CD4-positive, alpha-beta T cell (primary cell): ENCODE measurements at regions of chr7 and their contacts with region 1.

Region 1: GRCh38 chr7:147483634-147484292 is 1106.8 kb upstream of the C7orf33 start:
- DNase-seq: no peak
- ATAC-seq: no peak
- H3K4me3 ChIP-seq: no peak overlapping the region
- H3K4me3 Mint-ChIP-seq: no peak overlapping the region
- H3K27ac ChIP-seq: no peak overlapping the region
- H3K27ac Mint-ChIP-seq: no peak overlapping the region
- H3K4me1 ChIP-seq: no peaks in the 10 kb centered on the region
- H3K4me1 Mint-ChIP-seq: no peaks in the 10 kb centered on the region
- H3K27me3 ChIP-seq: no peaks in the 10 kb centered on the region
- H3K27me3 Mint-ChIP-seq: no peaks in the 10 kb centered on the region
- CTCF ChIP-seq: no peak

Region 2: GRCh38 chr7:147443942-147444341 is 39.8 kb before region 1 on chr7:
- CTCF ChIA-PET with region 1: no interaction called
- POLR2A ChIA-PET with region 1: no interaction called
- intact Hi-C with region 1: loop called in 1 of 2 experiments (anchors 2 kb)
- DNase-seq: no peak
- ATAC-seq: no peak
- H3K4me3 ChIP-seq: no peak overlapping the region
- H3K4me3 Mint-ChIP-seq: no peak overlapping the region
- H3K27ac ChIP-seq: no peak overlapping the region
- H3K27ac Mint-ChIP-seq: no peak overlapping the region
- H3K4me1 ChIP-seq: no peaks in the 10 kb centered on the region
- H3K4me1 Mint-ChIP-seq: no peaks in the 10 kb centered on the region
- H3K27me3 ChIP-seq: no peaks in the 10 kb centered on the region
- H3K27me3 Mint-ChIP-seq: no peaks in the 10 kb centered on the region
- CTCF ChIP-seq: no peak

Region 3: GRCh38 chr7:148485618-148486017 is 1001.9 kb after region 1 on chr7:
- CTCF ChIA-PET with region 1: no interaction called
- POLR2A ChIA-PET with region 1: no interaction called
- intact Hi-C with region 1: no loop called
- DNase-seq: no peak
- ATAC-seq: no peak
- H3K4me3 ChIP-seq: no peak overlapping the region
- H3K4me3 Mint-ChIP-seq: no peak overlapping the region
- H3K27ac ChIP-seq: no peak overlapping the region
- H3K27ac Mint-ChIP-seq: no peak overlapping the region
- H3K4me1 ChIP-seq: peaks cover 2% of the 10 kb centered on the region
- H3K4me1 Mint-ChIP-seq: no peaks in the 10 kb centered on the region
- H3K27me3 ChIP-seq: no peaks in the 10 kb centered on the region
- H3K27me3 Mint-ChIP-seq: peaks cover 21% of the 10 kb centered on the region
- CTCF ChIP-seq: no peak